ENCODE measurements at regions of chrX and their contacts with region 1.

Region 1: GRCh38 chrX:9396930-9397329 is 67.9 kb upstream of the TBL1X start:
- DNase-seq: peak; percentile 28
- ATAC-seq: peak; percentile 84
- H3K4me3 ChIP-seq: no peak overlapping the region
- H3K27ac ChIP-seq: peak overlapping the region; percentile 17; the same call in 1 of the 2 replicates
- H3K4me1 ChIP-seq: peaks cover 10% of the 10 kb centered on the region
- H3K27me3 ChIP-seq: no peaks in the 10 kb centered on the region
- CTCF ChIP-seq: no peak

Region 2: DNA sequence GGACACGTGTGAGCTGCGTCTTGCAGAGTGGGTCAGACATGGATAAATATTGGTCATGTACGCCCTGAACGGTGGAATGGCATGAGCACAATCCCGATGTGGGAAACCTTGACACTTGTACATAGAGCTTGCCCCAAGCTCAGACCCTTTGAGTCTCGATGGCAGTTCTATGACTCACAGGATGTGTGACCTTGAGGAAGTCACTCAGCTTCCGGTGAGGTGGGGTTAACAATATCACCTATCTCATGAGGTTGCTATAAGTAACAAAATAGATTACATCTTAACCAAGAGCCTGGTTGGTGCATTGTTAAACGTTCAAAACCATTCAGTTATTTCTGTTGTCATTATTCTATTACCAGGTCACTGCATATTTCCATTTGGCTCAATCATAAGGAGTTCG is 41.2 kb before region 1 on chrX:
- CTCF ChIA-PET with region 1: no interaction called
- POLR2A ChIA-PET with region 1: no interaction called
- intact Hi-C with region 1: no loop called
- DNase-seq: no peak
- ATAC-seq: no peak
- H3K4me3 ChIP-seq: no peak overlapping the region
- H3K27ac ChIP-seq: no peak overlapping the region
- H3K4me1 ChIP-seq: peaks cover 20% of the 10 kb centered on the region
- H3K27me3 ChIP-seq: no peaks in the 10 kb centered on the region
- CTCF ChIP-seq: no peak

Region 3: GRCh38 chrX:9379697-9380551 is 17.0 kb before region 1 on chrX:
- CTCF ChIA-PET with region 1: no interaction called
- POLR2A ChIA-PET with region 1: no interaction called
- intact Hi-C with region 1: loop called (anchors 1 kb)
- DNase-seq: peak; percentile 89
- ATAC-seq: peak; percentile 89
- H3K4me3 ChIP-seq: peak overlapping the region; percentile 13; the same call in 1 of the 2 replicates
- H3K27ac ChIP-seq: peak overlapping the region; percentile 92
- H3K4me1 ChIP-seq: peaks cover 27% of the 10 kb centered on the region
- H3K27me3 ChIP-seq: no peaks in the 10 kb centered on the region
- CTCF ChIP-seq: no peak

Region 4: GRCh38 chrX:9439004-9439403 is 42.1 kb after region 1 on chrX:
- CTCF ChIA-PET with region 1: no interaction called
- POLR2A ChIA-PET with region 1: no interaction called
- intact Hi-C with region 1: no loop called
- DNase-seq: no peak
- ATAC-seq: no peak
- H3K4me3 ChIP-seq: no peak overlapping the region
- H3K27ac ChIP-seq: no peak overlapping the region
- H3K4me1 ChIP-seq: no peaks in the 10 kb centered on the region
- H3K27me3 ChIP-seq: no peaks in the 10 kb centered on the region
- CTCF ChIP-seq: no peak